ENCODE measurements at regions of chr18 and their contacts with region 1.

Region 1: GRCh38 chr18:62584241-62585120 is 61.7 kb downstream of the ZCCHC2 start:
- DNase-seq: peak; percentile 91
- H3K4me3 Mint-ChIP-seq: no peak overlapping the region
- H3K27ac Mint-ChIP-seq: peak overlapping the region; percentile 94
- H3K4me1 Mint-ChIP-seq: peaks cover 39% of the 10 kb centered on the region
- H3K27me3 Mint-ChIP-seq: no peaks in the 10 kb centered on the region

Region 2: DNA sequence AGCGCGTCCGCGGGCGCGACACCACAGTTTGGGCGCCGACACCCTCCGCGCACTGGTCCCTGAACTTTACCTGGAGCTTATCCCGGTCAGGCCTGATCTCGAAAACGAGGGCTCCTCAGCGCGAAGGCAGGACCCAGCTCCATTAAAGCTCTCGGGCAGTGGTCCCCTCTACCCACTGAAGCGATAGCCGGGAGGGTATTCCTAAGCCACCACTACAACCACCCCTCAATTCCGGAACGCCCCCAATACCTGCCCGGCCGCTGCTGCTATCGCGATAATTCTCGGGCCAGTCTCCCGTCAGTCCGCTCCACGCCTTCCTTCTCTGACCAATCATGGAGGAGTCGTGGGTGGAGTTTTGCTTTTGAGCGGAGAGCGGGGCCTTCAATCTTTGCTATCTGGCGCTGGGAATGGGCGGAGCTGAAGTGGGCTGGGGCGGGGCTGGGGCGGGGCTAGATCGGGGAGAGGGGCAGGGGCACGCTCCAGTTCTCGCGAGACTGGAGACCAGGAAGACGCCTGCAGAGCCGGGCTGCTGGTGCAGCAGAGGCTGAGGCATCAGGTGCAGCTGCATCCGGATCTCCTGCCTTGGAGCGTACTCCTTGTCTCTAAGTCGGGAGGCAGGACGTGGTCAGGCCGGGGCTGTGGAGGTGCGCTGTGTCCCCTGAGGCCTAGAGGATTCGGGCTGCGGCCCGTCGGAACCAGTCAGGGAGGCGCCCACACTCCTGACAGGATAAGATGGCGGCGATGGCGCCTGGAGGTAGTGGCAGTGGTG is 397.5 kb before region 1 on chr18 and contains the starts of genes PIGN and RELCH:
- CTCF ChIA-PET with region 1: interaction called, 6 read pairs
- POLR2A ChIA-PET with region 1: interaction called, 3 read pairs
- intact Hi-C with region 1: loop called (anchors 1 kb)
- DNase-seq: peak; percentile 97
- H3K4me3 Mint-ChIP-seq: peak within 1 kb of the TSS; percentile 99
- H3K27ac Mint-ChIP-seq: peak within 1 kb of the TSS; percentile 93
- H3K4me1 Mint-ChIP-seq: peaks cover 51% of the 10 kb centered on the region
- H3K27me3 Mint-ChIP-seq: no peaks in the 10 kb centered on the region
- total RNA-seq, gene PIGN: 26.2 to 27.8 TPM
- total RNA-seq, gene RELCH: 16.1 to 17.7 TPM

Region 3: GRCh38 chr18:62396381-62396780 is 188.1 kb before region 1 on chr18:
- CTCF ChIA-PET with region 1: interaction called, 5 read pairs
- POLR2A ChIA-PET with region 1: no interaction called
- intact Hi-C with region 1: loop called (anchors 1 kb)
- DNase-seq: peak; percentile 58
- H3K4me3 Mint-ChIP-seq: no peak overlapping the region
- H3K27ac Mint-ChIP-seq: peak overlapping the region; percentile 19
- H3K4me1 Mint-ChIP-seq: peaks cover 27% of the 10 kb centered on the region
- H3K27me3 Mint-ChIP-seq: peaks cover 15% of the 10 kb centered on the region

Region 4: DNA sequence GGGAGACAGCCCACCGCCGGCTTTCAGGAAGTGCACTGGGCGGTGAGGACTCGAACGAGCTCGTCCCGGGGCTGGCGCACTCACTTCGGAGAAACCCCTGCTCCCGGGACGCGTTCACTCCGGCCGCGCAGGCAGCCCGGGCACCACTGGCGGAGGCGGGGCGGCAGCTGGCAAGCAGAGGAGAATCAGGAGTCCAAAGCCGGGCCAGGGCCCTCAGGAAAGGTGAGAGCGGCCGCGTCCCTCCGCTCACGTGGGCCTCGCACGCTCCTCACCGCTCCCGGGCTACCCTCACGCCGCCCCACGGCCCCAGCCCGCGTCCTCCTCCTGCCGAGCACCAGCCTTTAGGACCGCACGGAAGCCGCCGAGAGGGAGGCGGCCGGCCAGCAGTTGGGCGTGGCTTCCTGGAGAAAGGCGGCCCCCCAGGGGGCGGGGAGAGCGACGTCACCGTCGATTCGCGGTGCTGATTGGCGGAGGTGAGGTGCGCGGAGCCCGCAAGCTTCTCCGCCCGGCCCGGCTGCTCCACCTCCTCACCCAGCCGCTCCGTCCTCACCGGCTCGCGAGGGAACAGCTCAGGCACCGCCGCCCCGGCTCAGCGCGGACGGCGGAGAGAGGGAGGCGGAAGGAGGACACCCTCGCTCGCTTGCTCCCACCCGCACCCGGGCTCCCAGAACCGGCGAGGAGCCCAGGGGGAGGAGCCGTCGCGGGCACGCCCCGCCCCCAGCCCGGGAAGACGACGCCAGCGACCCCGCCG is 61.8 kb before region 1 on chr18 and contains the start of gene ZCCHC2:
- CTCF ChIA-PET with region 1: interaction called, 5 read pairs
- POLR2A ChIA-PET with region 1: interaction called, 4 read pairs
- intact Hi-C with region 1: loop called (anchors 1 kb)
- DNase-seq: peak; percentile 99
- H3K4me3 Mint-ChIP-seq: peak within 1 kb of the TSS; percentile 94
- H3K27ac Mint-ChIP-seq: peak within 1 kb of the TSS; percentile 94
- H3K4me1 Mint-ChIP-seq: peaks cover 16% of the 10 kb centered on the region
- H3K27me3 Mint-ChIP-seq: no peaks in the 10 kb centered on the region
- total RNA-seq, gene ZCCHC2: 24.9 to 27.5 TPM

Region 5: GRCh38 chr18:62714671-62715435 is 130.4 kb after region 1 on chr18:
- CTCF ChIA-PET with region 1: interaction called, 11 read pairs
- POLR2A ChIA-PET with region 1: no interaction called
- intact Hi-C with region 1: loop called (anchors 1 kb)
- DNase-seq: peak; percentile 97
- H3K4me3 Mint-ChIP-seq: peak overlapping the region; percentile 78
- H3K27ac Mint-ChIP-seq: peak overlapping the region; percentile 66
- H3K4me1 Mint-ChIP-seq: peaks cover 31% of the 10 kb centered on the region
- H3K27me3 Mint-ChIP-seq: peaks cover 2% of the 10 kb centered on the region

Region 6: GRCh38 chr18:62957885-62958472 is 373.5 kb after region 1 on chr18:
- CTCF ChIA-PET with region 1: interaction called, 22 read pairs
- POLR2A ChIA-PET with region 1: no interaction called
- intact Hi-C with region 1: loop called (anchors 1 kb)
- DNase-seq: peak; percentile 68
- H3K4me3 Mint-ChIP-seq: no peak overlapping the region
- H3K27ac Mint-ChIP-seq: no peak overlapping the region
- H3K4me1 Mint-ChIP-seq: peaks cover 5% of the 10 kb centered on the region
- H3K27me3 Mint-ChIP-seq: no peaks in the 10 kb centered on the region

Region 7: GRCh38 chr18:62982600-62983251 is 398.2 kb after region 1 on chr18:
- CTCF ChIA-PET with region 1: interaction called, 42 read pairs
- POLR2A ChIA-PET with region 1: no interaction called
- intact Hi-C with region 1: loop called (anchors 1 kb)
- DNase-seq: peak; percentile 66
- H3K4me3 Mint-ChIP-seq: no peak overlapping the region
- H3K27ac Mint-ChIP-seq: no peak overlapping the region
- H3K4me1 Mint-ChIP-seq: no peaks in the 10 kb centered on the region
- H3K27me3 Mint-ChIP-seq: no peaks in the 10 kb centered on the region

Measured in activated CD4-positive, alpha-beta memory T cell treated with anti-CD3 and anti-CD28 coated beads for 36 hours (primary cell).